Dendritic cell treated with granulocyte-macrophage colony-stimulating factor and Interleukin-4, amounts not matched to agents 40 ng/mL and 50 ng/mL, for 4 days (primary cell): ENCODE measurements at regions of chr17 and their contacts with region 1.

Region 1: DNA sequence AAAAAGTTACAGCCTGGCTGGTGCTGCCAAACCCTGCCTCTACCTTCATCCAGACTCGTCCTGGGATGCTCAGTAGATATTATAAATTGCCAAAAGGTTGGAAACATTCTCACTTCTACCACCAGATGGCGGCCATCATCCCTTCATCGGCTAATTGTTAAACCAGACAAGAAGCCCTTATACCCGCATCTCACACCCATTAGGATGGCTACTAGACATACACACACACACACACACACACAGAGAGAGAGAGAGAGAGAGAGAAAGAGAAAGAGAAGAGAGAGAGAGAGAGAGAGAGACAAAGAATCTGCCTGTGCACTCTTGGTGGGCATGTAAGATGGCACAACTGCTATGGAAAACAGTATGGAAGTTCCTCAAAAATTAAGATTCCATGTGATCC is 15.0 kb upstream of the SCIMP start:
- H3K4me3 Mint-ChIP-seq: no peak overlapping the region
- H3K27ac Mint-ChIP-seq: no peak overlapping the region
- H3K4me1 Mint-ChIP-seq: peaks cover 12% of the 10 kb centered on the region
- H3K27me3 Mint-ChIP-seq: no peaks in the 10 kb centered on the region

Region 2: GRCh38 chr17:4980644-4981216 is 268.9 kb before region 1 on chr17:
- intact Hi-C with region 1: no loop called
- H3K4me3 Mint-ChIP-seq: no peak overlapping the region
- H3K27ac Mint-ChIP-seq: peak overlapping the region; percentile 71
- H3K4me1 Mint-ChIP-seq: peaks cover 65% of the 10 kb centered on the region
- H3K27me3 Mint-ChIP-seq: no peaks in the 10 kb centered on the region

Region 3: GRCh38 chr17:5237541-5238016 is 12.0 kb before region 1 on chr17:
- intact Hi-C with region 1: no loop called
- H3K4me3 Mint-ChIP-seq: peak overlapping the region; percentile 68
- H3K27ac Mint-ChIP-seq: peak overlapping the region; percentile 56
- H3K4me1 Mint-ChIP-seq: peaks cover 54% of the 10 kb centered on the region
- H3K27me3 Mint-ChIP-seq: peaks cover 5% of the 10 kb centered on the region

Region 4: DNA sequence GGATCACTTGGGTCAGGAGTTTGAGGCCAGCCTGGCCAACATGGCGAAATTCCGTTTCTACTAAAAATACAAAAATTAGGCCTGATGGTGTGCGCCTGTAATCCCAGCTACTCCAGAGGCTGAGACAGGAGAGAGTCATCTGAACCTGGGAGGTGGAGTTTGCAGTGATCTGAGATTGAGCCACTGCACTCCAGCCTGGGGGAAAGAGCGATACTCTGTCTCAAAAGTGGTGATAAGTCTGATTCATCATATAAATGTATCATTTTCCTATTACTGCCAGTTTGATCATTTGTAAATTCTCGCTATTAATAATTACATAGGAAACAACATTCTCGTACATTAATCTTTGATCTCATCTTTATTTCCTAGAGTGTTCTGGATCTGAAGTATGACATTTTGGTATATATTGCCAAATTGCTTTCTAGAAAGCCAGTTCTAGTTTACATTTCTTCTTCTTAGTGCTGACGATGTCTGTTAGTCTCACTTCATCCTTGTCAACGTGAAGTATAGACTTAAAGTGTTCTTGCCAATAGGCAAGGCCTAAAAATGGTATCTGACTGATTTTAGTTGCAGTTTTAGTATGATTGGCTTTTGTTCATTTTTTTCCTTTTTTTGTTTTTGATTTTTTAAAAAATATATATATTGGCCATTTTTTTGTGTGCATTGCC is 42.2 kb after region 1 on chr17:
- intact Hi-C with region 1: no loop called
- H3K4me3 Mint-ChIP-seq: no peak overlapping the region
- H3K27ac Mint-ChIP-seq: no peak overlapping the region
- H3K4me1 Mint-ChIP-seq: peaks cover 19% of the 10 kb centered on the region
- H3K27me3 Mint-ChIP-seq: no peaks in the 10 kb centered on the region

Region 5: GRCh38 chr17:5304636-5305035 is 55.0 kb after region 1 on chr17:
- intact Hi-C with region 1: loop called (anchors 10 kb)
- H3K4me3 Mint-ChIP-seq: no peak overlapping the region
- H3K27ac Mint-ChIP-seq: no peak overlapping the region
- H3K4me1 Mint-ChIP-seq: peaks cover 34% of the 10 kb centered on the region
- H3K27me3 Mint-ChIP-seq: no peaks in the 10 kb centered on the region

Region 6: DNA sequence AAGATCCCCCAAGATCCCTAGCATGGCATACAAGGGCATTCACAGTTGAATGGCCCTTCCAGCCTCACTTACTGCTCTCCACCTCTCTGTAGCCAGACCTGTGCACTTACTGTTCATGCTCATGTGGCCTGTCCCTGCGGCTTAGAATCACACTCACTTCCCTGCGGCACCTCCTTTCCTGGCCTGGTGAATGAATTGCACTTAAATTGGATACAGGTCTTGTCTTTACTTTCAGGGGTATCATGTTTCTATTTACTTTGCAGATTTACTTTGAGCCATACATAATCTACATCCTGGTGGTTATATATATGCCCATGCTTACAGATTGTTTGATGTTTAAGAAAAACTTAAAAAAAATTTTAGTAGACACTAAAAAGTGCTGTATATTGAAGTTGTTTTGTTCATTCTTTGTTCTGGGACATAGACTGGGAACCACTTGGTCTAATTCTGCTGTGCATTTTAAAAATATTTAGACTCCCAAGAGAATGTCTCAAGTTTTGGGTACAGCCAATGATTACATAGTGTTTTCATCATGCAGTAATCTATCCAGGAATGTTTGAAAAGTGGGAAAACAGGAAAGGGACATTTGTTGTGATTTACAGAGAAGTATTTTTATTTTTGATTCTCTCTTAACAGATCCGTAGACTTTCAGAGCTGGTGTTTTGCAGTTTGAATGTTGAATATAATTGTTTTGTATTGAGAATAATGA is 106.0 kb after region 1 on chr17:
- intact Hi-C with region 1: no loop called
- H3K4me3 Mint-ChIP-seq: no peak overlapping the region
- H3K27ac Mint-ChIP-seq: no peak overlapping the region
- H3K4me1 Mint-ChIP-seq: no peaks in the 10 kb centered on the region
- H3K27me3 Mint-ChIP-seq: no peaks in the 10 kb centered on the region